AG04449 (cell line): ENCODE measurements at regions of chr1 and their contacts with region 1.

Region 1: GRCh38 chr1:26161415-26162219 is 2.7 kb downstream of the FAM110D start:
- DNase-seq: no peak
- H3K4me3 ChIP-seq: peak overlapping the region; percentile 30
- CTCF ChIP-seq: peak; percentile 18

Region 2: DNA sequence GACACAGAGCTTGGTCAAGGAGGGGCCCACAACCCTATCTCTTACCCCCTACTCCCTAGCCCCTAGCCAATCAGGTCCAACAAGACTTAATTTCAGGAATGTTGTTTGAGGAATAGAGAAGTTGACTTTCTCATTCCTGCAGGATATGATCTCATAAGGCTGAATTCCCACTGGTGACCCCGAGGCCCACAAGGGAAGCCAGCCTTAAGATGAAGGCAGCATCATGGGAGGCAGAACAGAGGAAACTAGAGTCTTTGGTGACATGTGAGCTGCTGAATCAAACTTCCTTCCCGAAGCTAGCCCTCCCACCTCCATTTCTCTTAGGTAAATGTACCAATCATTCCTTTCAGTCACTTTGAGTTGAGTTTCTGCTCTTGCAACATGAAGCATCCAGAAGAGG is 59.1 kb before region 1 on chr1:
- CTCF ChIA-PET with region 1: interaction called, 36 read pairs
- POLR2A ChIA-PET with region 1: no interaction called
- DNase-seq: no peak
- H3K4me3 ChIP-seq: no peak overlapping the region
- CTCF ChIP-seq: no peak